Ascending aorta (tissue), 2 donors: ENCODE measurements at regions of chr1 and their contacts with region 1.

Region 1: DNA sequence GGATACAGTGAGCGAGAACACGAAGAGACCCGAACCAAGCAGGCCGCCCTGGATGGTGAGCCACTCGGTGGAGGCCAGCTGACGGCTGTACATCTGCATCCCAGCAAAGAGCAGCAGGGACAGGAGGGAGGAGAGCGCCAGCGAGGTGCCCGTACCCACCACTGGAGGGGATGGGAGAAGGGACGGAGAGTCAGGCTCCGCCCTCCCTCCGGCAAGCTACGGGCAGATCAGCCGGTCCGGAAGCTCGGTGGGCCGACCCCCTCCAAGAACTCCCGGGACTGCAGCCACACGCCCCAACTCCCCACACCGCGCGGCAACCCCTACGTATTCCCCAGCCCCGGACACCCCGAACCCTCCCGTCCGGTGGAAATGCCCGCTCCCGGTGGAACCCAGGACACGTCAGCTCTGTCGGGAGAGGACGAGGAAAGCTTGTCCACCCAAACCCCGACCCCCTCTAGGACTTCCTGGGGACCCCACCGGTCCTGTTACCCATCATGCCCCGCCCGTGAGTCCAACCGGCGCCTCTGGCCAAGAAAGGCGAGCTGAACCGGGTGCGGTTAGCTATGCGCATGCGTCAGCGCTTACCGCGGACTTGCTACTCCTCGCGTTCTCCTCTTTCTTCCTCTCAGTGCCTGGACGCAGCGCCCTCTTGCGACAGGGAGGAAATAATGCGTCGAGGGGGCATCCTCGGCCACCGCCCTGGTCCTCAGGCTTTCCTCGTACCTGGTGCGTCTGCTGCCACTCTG is at the start of gene KRTCAP2:
- DNase-seq: peak; percentile 84 to 98
- H3K4me3 ChIP-seq: peak within 1 kb of the TSS; percentile 76 to 84
- H3K27ac ChIP-seq: peak within 1 kb of the TSS; percentile 92 to 93
- H3K4me1 ChIP-seq: peaks cover 10 to 15% of the 10 kb centered on the region in 2 donors
- H3K27me3 ChIP-seq: no peaks in the 10 kb centered on the region
- CTCF ChIP-seq: peak; percentile 87 to 95 (median 90)
- total RNA-seq, gene KRTCAP2: 146 TPM

Region 2: DNA sequence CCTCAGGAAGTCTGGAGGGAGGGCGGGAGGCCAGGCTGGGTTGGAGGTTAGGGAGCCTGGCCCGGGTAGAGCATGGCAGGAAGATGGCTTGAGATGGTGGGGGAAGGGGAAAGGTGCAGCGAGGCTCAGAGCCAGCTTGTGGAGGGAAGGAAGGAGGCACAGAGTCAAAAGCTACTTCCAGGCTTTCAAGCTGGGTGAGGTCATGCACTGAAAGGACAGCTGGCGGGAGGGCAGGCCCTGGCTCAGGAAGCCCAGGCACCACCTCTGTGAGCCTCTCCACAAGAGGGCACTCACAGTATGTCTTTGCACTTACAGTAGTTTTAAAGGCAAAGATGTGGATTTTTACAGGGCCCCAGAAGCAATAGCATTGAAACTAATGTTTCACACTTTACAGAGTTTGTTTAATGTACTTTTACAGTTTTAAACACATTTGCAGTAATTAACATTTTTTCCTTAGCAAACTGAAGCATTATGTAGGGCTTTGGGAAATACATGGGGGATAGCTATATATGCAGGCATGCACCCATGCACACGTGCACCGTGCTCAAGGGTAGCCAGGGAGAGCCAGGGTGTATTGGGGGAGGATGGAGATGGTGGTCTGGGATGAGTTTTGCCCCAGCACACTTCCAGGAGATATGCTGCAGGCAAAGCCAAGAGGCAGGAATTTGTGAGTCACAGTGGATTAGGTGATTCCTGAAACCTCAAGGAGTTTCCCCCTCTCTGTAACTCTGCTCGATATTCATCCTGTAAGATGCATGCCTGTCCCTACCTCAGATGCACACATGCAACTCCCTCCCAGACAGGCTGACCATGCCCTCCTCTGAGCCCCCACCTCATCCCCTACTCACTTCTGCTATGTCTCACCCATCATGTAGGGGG is 127.9 kb before region 1 on chr1:
- intact Hi-C with region 1: no loop called
- DNase-seq: peak; percentile 51 to 91
- H3K4me3 ChIP-seq: no peak overlapping the region
- H3K27ac ChIP-seq: no peak overlapping the region
- H3K4me1 ChIP-seq: peaks cover 0 to 4% of the 10 kb centered on the region in 2 donors
- H3K27me3 ChIP-seq: no peaks in the 10 kb centered on the region
- CTCF ChIP-seq: peak; percentile 54 to 83 (median 72)

Region 3: DNA sequence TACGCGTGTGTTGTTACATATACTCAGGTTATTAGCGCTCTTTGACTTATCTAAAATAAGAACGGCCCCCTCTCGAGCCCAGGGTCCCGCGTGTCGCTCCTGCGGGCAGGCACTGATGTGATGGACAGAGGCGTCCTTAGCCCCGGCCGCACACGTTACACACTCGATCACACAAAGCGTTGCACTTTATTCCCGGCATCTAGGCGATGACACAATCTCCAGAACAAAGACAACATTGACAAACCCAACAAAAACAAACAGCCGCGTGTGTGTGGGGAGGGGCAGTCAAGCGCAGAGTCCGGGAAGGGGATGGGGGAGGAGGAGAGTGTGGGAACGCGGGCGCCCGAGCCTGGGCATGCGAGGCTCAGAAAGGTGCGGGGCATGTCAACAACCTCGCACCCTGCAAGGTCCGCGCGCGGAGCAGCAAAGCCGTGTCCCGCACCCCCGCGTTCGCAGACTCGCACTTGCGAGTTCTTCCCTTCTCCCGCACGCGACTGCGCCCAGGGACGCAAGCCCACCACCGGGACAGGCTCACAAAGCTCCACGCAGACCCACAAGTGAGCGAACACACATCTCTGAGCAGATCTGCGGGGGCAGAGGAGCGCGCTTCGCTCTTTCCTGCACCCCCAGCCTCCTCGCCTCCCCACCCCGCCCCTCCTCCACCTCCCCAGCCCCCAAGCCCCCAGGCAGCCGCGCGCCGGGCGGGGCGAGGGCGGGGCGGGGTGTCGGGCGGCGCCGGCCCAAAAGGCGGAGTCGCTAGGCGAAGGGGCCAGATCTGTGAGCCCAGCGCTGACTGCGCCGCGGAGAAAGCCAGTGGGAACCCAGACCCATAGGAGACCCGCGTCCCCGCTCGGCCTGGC is 45.6 kb before region 1 on chr1 and contains the start of gene EFNA1:
- intact Hi-C with region 1: loop called (anchors 5 kb)
- DNase-seq: peak in 1 of 2 donors; percentile 78
- H3K4me3 ChIP-seq: peak within 1 kb of the TSS; percentile 63 to 70
- H3K27ac ChIP-seq: no peak within 1 kb of the TSS
- H3K4me1 ChIP-seq: peaks cover 20 to 30% of the 10 kb centered on the region in 2 donors
- H3K27me3 ChIP-seq: peaks cover 9% of the 10 kb centered on the region
- CTCF ChIP-seq: no peak
- total RNA-seq, gene EFNA1: 66.7 TPM

Region 4: DNA sequence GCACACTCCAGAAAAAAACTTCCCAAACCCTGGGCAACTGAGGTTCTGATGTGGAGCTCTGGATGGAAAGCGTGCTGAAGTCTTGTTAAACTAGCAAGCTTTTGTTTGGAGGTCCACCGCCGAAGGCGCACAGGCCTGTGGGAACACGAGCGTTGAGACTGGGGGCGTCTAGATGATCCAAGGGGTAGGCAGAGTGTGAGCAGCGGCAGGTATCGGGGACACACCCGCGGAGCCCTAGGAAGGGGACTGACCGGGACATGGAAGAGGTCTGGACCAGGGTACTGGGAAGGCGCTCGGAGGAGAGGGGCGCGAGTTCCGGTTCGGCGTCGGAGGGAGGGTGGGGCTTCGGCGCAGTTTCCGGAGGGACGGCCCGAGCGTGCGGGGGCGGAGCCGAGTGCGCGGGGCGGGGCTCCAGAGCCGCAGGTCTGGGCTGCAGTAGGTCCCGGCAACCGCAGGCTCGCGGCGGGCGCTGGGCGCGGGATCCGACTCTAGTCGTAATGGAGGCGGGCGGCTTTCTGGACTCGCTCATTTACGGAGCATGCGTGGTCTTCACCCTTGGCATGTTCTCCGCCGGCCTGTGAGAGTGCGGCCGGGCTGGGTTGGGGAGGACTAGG is 37.4 kb before region 1 on chr1 and contains the start of gene SLC50A1:
- intact Hi-C with region 1: loop called (anchors 1 kb)
- DNase-seq: peak; percentile 78 to 98
- H3K4me3 ChIP-seq: peak within 1 kb of the TSS; percentile 76 to 80
- H3K27ac ChIP-seq: peak within 1 kb of the TSS; percentile 97 to 100
- H3K4me1 ChIP-seq: peaks cover 9 to 25% of the 10 kb centered on the region in 2 donors
- H3K27me3 ChIP-seq: no peaks in the 10 kb centered on the region
- CTCF ChIP-seq: peak; percentile 26 to 72 (median 39)
- total RNA-seq, gene SLC50A1: 9.4 TPM

Region 5: GRCh38 chr1:155193275-155193990 is 20.5 kb after region 1 on chr1:
- intact Hi-C with region 1: loop called (anchors 1 kb)
- DNase-seq: peak; percentile 61 to 94
- H3K4me3 ChIP-seq: peak overlapping the region; percentile 59 to 69
- H3K27ac ChIP-seq: peak overlapping the region; percentile 84 to 87
- H3K4me1 ChIP-seq: peaks cover 19 to 20% of the 10 kb centered on the region in 2 donors
- H3K27me3 ChIP-seq: no peaks in the 10 kb centered on the region
- CTCF ChIP-seq: peak; percentile 96 to 99 (median 98)

Region 6: GRCh38 chr1:155227261-155228095 is 54.6 kb after region 1 on chr1:
- intact Hi-C with region 1: loop called (anchors 1 kb)
- DNase-seq: peak; percentile 96 to 99
- H3K4me3 ChIP-seq: peak overlapping the region; percentile 65 to 67
- H3K27ac ChIP-seq: peak overlapping the region; percentile 79 to 86
- H3K4me1 ChIP-seq: peaks cover 3 to 36% of the 10 kb centered on the region in 2 donors
- H3K27me3 ChIP-seq: no peaks in the 10 kb centered on the region
- CTCF ChIP-seq: no peak